K562 (cell line): ENCODE measurements at regions of chr15 and their contacts with region 1.

Region 1: DNA sequence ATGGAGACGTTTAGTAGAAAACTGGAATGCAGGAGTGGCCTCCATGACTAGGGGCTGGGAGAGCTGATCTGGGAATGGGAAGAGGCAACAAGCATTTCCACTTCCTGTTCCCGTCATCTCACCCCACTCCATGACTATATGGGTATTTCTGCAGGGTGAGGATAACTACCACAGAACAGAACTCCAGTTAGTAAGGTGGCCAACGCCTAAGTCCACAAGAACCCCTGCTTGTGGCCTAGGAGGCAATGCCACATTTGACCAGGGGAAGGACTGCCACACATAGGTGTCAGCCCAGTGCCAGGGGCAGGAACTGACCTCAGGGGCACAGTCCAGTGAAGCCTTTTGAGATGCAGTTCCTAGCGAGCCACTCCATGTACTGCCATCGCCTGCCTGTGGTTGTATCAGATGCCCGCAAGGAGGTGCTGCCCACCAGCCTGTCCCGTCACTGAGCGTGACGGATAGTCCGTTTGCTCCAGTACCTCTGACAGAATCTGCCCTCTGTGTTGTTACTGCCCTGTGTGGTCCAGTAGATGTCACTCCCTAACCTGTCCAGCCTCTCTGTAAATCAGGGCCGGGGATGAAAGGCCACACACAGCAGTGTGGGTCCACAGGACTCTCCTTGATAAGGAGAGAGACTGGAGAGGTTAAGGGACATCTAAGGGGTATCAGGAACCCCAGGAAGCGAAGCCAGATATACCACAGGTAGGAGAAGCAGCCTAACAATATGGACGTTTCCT is 3.5 kb upstream of the MTFMT start:
- DNase-seq: peak; percentile 48 to 72 (median 52)
- ATAC-seq: peak; percentile 77
- H3K4me3 ChIP-seq: no peak overlapping the region
- H3K27ac ChIP-seq: no peak overlapping the region
- H3K4me1 ChIP-seq: peaks cover 7 to 13% of the 10 kb centered on the region in 2 experiments; a peak in 4 of 5 replicates
- H3K27me3 ChIP-seq: no peaks in the 10 kb centered on the region
- CTCF ChIP-seq: peak; percentile 78 to 86 (median 80)
- EP300 ChIP-seq: no peak
- POLR2A ChIP-seq: no peak
- RAD21 ChIP-seq: peak; percentile 45 to 77

Region 2: GRCh38 chr15:65086017-65086679 is 53.2 kb after region 1 on chr15:
- CTCF ChIA-PET with region 1: interaction called, 17 read pairs
- POLR2A ChIA-PET with region 1: no interaction called
- in situ Hi-C with region 1: no loop called
- intact Hi-C with region 1: loop called (anchors 5 kb)
- DNase-seq: peak; percentile 54 to 64 (median 58)
- ATAC-seq: peak; percentile 91
- H3K4me3 ChIP-seq: no peak overlapping the region
- H3K27ac ChIP-seq: no peak overlapping the region
- H3K4me1 ChIP-seq: peaks cover 0 to 4% of the 10 kb centered on the region in 2 experiments; a peak in 1 of 5 replicates
- H3K27me3 ChIP-seq: peaks cover 28 to 51% of the 10 kb centered on the region in 2 experiments
- CTCF ChIP-seq: peak; percentile 66 to 73 (median 73)
- EP300 ChIP-seq: no peak
- POLR2A ChIP-seq: no peak
- RAD21 ChIP-seq: peak in 1 of 2 experiments; percentile 53; a peak in 2 of 4 replicates

Region 3: GRCh38 chr15:65101411-65101890 is 68.5 kb after region 1 on chr15:
- CTCF ChIA-PET with region 1: no interaction called
- POLR2A ChIA-PET with region 1: no interaction called
- in situ Hi-C with region 1: no loop called
- intact Hi-C with region 1: loop called (anchors 5 kb)
- DNase-seq: peak; percentile 53 to 70 (median 65)
- ATAC-seq: peak; percentile 81
- H3K4me3 ChIP-seq: no peak overlapping the region
- H3K27ac ChIP-seq: no peak overlapping the region
- H3K4me1 ChIP-seq: no peaks in the 10 kb centered on the region
- H3K27me3 ChIP-seq: no peaks in the 10 kb centered on the region
- CTCF ChIP-seq: peak; percentile 76 to 85 (median 83)
- EP300 ChIP-seq: no peak
- POLR2A ChIP-seq: no peak
- RAD21 ChIP-seq: peak; percentile 29 to 60

Region 4: GRCh38 chr15:65292938-65293518 is 260.1 kb after region 1 on chr15:
- CTCF ChIA-PET with region 1: no interaction called
- POLR2A ChIA-PET with region 1: no interaction called
- in situ Hi-C with region 1: no loop called
- intact Hi-C with region 1: loop called (anchors 2 kb)
- DNase-seq: no peak
- ATAC-seq: no peak
- H3K4me3 ChIP-seq: no peak overlapping the region
- H3K27ac ChIP-seq: no peak overlapping the region
- H3K4me1 ChIP-seq: peaks cover 7 to 15% of the 10 kb centered on the region in 2 experiments; a peak in 4 of 5 replicates
- H3K27me3 ChIP-seq: no peaks in the 10 kb centered on the region
- CTCF ChIP-seq: no peak
- EP300 ChIP-seq: no peak
- POLR2A ChIP-seq: no peak
- RAD21 ChIP-seq: no peak

Region 5: GRCh38 chr15:65384895-65385858 is 352.2 kb after region 1 on chr15:
- CTCF ChIA-PET with region 1: interaction called, 6 read pairs
- POLR2A ChIA-PET with region 1: no interaction called
- in situ Hi-C with region 1: no loop called
- intact Hi-C with region 1: loop called (anchors 10 kb)
- DNase-seq: peak; percentile 88 to 91 (median 90)
- ATAC-seq: peak; percentile 96
- H3K4me3 ChIP-seq: peak overlapping the region; percentile 20; the same call in 1 of the 2 replicates
- H3K27ac ChIP-seq: no peak overlapping the region
- H3K4me1 ChIP-seq: peaks cover 6 to 15% of the 10 kb centered on the region in 2 experiments; a peak in 4 of 5 replicates
- H3K27me3 ChIP-seq: peaks cover 48 to 66% of the 10 kb centered on the region in 2 experiments; a peak in 4 of 5 replicates
- CTCF ChIP-seq: peak; percentile 93 to 97 (median 96)
- EP300 ChIP-seq: no peak
- POLR2A ChIP-seq: no peak
- RAD21 ChIP-seq: peak; percentile 86 to 96